ENCODE measurements at regions of chr2 and their contacts with region 1.

Region 1: GRCh38 chr2:196131384-196131937 is 39.9 kb downstream of the STK17B start:
- DNase-seq: peak; percentile 90
- H3K4me3 Mint-ChIP-seq: no peak overlapping the region
- H3K27ac Mint-ChIP-seq: peak overlapping the region; percentile 83
- H3K4me1 Mint-ChIP-seq: peaks cover 16% of the 10 kb centered on the region
- H3K27me3 Mint-ChIP-seq: no peaks in the 10 kb centered on the region

Region 2: DNA sequence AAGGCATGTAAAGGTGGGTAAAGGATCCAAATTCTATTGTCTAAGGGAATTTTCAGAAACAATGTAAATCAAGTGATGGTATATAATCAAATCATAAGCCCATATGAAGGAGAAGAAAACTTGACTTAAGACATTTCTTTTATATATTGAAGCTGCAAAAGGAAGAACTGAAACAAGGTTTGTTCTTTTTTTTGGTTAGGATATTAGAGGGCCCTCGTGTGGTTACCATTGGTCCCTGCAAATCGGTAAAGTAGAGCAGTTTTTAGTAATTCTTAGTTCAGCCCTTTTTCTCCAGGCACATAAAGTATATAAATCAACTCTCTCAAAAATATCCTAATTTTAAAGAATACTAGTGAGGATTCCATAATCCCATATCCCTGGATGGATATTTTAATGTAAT is 145.5 kb after region 1 on chr2:
- intact Hi-C with region 1: loop called (anchors 1 kb)
- DNase-seq: peak; percentile 80
- H3K4me3 Mint-ChIP-seq: no peak overlapping the region
- H3K27ac Mint-ChIP-seq: no peak overlapping the region
- H3K4me1 Mint-ChIP-seq: peaks cover 48% of the 10 kb centered on the region
- H3K27me3 Mint-ChIP-seq: no peaks in the 10 kb centered on the region

Region 3: GRCh38 chr2:196337208-196337953 is 205.9 kb after region 1 on chr2:
- intact Hi-C with region 1: loop called (anchors 1 kb)
- DNase-seq: peak; percentile 68
- H3K4me3 Mint-ChIP-seq: no peak overlapping the region
- H3K27ac Mint-ChIP-seq: no peak overlapping the region
- H3K4me1 Mint-ChIP-seq: peaks cover 3% of the 10 kb centered on the region
- H3K27me3 Mint-ChIP-seq: peaks cover 10% of the 10 kb centered on the region

Region 4: DNA sequence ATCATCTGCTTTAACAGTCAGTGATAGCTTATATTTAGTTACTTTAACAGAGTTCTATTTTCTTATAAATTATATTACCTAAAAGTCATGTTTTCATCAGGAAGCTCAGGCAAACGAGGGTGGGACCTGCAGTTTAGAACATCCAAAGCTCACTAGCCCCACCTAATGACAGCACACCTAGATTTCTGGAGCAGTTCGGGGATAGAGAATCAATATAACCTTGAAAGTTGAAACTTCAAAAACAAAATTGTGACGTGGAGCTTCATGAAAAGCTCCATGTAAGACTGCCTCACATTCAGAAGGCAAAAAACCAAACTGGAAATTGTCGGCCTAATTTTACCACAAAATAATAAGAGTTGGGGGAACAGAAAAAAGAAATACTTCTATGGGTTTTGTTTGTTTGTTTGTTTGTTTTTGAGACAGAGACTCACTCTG is 322.2 kb after region 1 on chr2:
- intact Hi-C with region 1: loop called (anchors 5 kb)
- DNase-seq: peak; percentile 80
- H3K4me3 Mint-ChIP-seq: no peak overlapping the region
- H3K27ac Mint-ChIP-seq: no peak overlapping the region
- H3K4me1 Mint-ChIP-seq: peaks cover 1% of the 10 kb centered on the region
- H3K27me3 Mint-ChIP-seq: peaks cover 26% of the 10 kb centered on the region